ENCODE measurements at regions of chr2 and their contacts with region 1.

Region 1: DNA sequence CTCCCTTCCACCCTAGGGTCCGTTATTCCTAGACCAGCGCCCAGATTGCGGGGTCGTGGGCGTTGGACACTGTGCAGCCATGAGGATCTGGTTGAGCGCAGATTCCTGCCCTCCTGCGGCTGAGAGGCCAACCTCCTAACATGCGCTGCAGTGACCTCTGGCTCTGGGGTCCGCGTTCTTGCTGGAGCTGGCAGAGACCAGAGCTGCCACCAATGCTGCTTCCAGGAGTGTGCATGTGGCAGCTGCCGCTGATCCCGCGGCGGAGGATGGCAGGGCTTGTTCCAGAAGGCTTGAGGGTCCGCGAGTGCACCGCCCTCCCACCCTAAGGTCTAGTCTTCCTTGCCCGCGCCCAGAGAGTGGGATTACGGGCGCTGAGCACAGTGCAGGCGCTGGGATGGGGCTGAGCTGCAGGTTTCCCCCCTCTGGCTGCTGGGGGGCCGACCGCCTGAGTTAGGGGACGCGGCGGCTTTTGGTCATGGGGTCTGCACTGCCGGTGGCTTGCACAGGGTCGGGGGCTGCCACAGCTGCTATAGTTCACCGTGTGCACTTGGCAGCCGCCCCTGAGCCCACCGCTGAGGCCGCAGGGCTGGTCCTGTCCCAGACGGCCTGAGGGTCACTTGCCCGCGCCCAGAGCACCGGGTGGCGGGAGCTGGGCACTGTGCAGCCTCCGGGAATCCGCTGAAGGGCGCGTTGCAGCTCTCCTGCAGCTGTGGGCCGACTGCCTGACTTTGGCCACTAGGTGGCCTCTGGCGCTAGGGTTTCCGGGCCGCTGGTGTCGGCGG is 145.9 kb downstream of the CCDC74A start:
- DNase-seq: peak; percentile 67
- H3K4me3 ChIP-seq: peak overlapping the region in 2 of 3 experiments; percentile 15 to 25
- H3K27ac ChIP-seq: no peak overlapping the region
- H3K4me1 ChIP-seq: peaks cover 22% of the 10 kb centered on the region
- H3K27me3 ChIP-seq: no peaks in the 10 kb centered on the region
- CTCF ChIP-seq: peak; percentile 77 to 91
- POLR2A ChIP-seq: no peak

Region 2: GRCh38 chr2:131154071-131154531 is 519.5 kb before region 1 on chr2:
- CTCF ChIA-PET with region 1: interaction called, 51 read pairs
- POLR2A ChIA-PET with region 1: no interaction called
- dilution Hi-C with region 1: no loop called
- intact Hi-C with region 1: loop called (anchors 1 kb)
- DNase-seq: peak; percentile 62
- H3K4me3 ChIP-seq: no peak overlapping the region
- H3K27ac ChIP-seq: no peak overlapping the region
- H3K4me1 ChIP-seq: no peaks in the 10 kb centered on the region
- H3K27me3 ChIP-seq: peaks cover 0 to 2% of the 10 kb centered on the region in 2 experiments
- CTCF ChIP-seq: peak; percentile 79 to 84
- POLR2A ChIP-seq: no peak

Region 3: GRCh38 chr2:131413148-131413747 is 260.3 kb before region 1 on chr2:
- CTCF ChIA-PET with region 1: interaction called, 78 read pairs
- POLR2A ChIA-PET with region 1: no interaction called
- dilution Hi-C with region 1: no loop called
- intact Hi-C with region 1: loop called (anchors 1 kb)
- DNase-seq: peak; percentile 79
- H3K4me3 ChIP-seq: no peak overlapping the region
- H3K27ac ChIP-seq: no peak overlapping the region
- H3K4me1 ChIP-seq: no peaks in the 10 kb centered on the region
- H3K27me3 ChIP-seq: peaks cover 17 to 25% of the 10 kb centered on the region in 2 experiments
- CTCF ChIP-seq: peak; percentile 42 to 50
- POLR2A ChIP-seq: no peak

Region 4: GRCh38 chr2:131659168-131659572 is 14.4 kb before region 1 on chr2:
- CTCF ChIA-PET with region 1: interaction called, 11 read pairs
- POLR2A ChIA-PET with region 1: no interaction called
- dilution Hi-C with region 1: no loop called
- intact Hi-C with region 1: no loop called
- DNase-seq: no peak
- H3K4me3 ChIP-seq: no peak overlapping the region
- H3K27ac ChIP-seq: no peak overlapping the region
- H3K4me1 ChIP-seq: no peaks in the 10 kb centered on the region
- H3K27me3 ChIP-seq: peaks cover 2 to 8% of the 10 kb centered on the region in 2 experiments
- CTCF ChIP-seq: no peak
- POLR2A ChIP-seq: no peak

Region 5: DNA sequence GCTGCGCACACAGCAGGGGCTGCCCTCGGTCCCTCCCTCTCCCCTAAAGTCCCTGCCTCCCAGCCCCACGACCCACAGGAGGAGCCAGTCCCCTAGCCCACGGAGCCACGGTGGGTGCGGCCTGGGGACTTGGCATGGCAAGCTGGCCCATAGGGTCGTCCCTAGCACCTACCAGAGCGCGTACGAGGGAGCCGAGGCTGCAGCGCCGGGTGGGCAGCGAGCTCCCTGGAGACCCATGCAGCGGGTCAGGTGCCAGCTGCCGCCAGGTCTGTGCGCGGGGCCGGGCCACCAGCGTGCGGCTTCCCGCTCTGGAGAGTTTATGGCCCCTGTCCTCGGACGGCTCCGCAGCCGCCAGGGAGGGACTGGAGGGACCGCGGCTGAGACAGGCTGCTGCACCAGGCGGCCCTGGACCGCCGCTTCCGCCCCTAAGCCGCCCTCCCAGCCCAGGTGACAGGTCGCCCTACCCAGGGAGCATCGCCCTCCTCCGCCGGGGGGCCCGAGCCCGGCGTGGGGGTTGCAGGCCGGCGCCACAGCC is 127.7 kb after region 1 on chr2:
- CTCF ChIA-PET with region 1: interaction called, 49 read pairs
- POLR2A ChIA-PET with region 1: no interaction called
- dilution Hi-C with region 1: no loop called
- intact Hi-C with region 1: loop called (anchors 1 kb)
- DNase-seq: no peak
- H3K4me3 ChIP-seq: no peak overlapping the region
- H3K27ac ChIP-seq: no peak overlapping the region
- H3K4me1 ChIP-seq: peaks cover 3% of the 10 kb centered on the region
- H3K27me3 ChIP-seq: no peaks in the 10 kb centered on the region
- CTCF ChIP-seq: no peak
- POLR2A ChIP-seq: no peak

Measured in endothelial cell of umbilical vein (primary cell).